ENCODE measurements at regions of chr5 and their contacts with region 1.

Region 1: DNA sequence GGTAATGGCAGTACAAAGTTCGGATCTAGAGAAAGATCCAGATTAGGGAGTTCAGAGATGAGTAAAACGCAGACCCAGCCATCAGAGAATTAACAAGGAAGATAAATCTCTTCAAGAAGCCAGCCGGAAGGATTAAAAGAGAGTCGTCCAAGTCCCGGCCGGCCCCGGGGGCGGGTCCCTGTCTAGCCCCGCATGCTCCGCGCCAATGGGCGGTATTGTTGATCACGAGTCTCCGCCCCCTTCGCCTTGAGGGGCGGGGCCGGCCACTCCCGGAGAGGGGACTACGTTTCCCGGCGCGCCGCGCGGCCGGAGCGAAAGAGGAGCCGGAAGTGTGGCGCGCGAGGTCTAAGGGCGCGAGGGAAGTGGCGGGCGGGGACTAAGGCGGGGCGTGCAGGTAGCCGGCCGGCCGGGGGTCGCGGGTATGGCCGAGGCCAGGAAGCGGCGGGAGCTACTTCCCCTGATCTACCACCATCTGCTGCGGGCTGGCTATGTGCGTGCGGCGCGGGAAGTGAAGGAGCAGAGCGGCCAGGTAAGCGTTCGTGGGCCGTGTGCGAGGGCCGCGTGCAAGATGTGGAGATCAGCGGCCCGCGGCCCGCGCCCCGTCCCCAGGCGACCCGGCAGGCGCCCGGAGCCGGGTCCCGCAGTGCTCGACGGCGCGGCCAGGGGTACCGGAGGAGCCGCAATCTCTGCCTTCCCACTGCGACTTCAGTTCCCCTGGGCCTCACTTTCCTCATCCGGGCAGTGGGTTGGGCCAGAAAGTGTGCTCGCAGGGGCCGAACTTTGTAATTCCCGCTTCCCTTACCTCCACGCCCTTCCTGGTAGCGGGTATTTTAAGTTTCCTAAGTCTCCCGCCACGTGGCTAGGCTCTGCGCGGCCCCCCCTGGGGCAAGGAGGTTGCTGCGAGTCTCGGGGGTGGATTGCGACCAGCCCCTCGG is at the start of gene TCOF1:
- DNase-seq: peak; percentile 94 to 98 (median 97)
- ATAC-seq: peak; percentile 100
- H3K4me3 ChIP-seq: peak within 1 kb of the TSS; percentile 62
- H3K4me3 Mint-ChIP-seq: peak within 1 kb of the TSS; percentile 85 to 95 (median 91)
- H3K27ac ChIP-seq: peak within 1 kb of the TSS; percentile 81
- H3K27ac Mint-ChIP-seq: peak within 1 kb of the TSS; percentile 87 to 97 (median 96)
- H3K4me1 ChIP-seq: peaks cover 23 to 24% of the 10 kb centered on the region in 2 donors
- H3K4me1 Mint-ChIP-seq: peaks cover 35 to 54% (median 48%) of the 10 kb centered on the region in 7 donors
- H3K27me3 ChIP-seq: no peaks in the 10 kb centered on the region
- H3K27me3 Mint-ChIP-seq: peaks cover 0 to 2% (median 0%) of the 10 kb centered on the region in 5 donors
- total RNA-seq, gene TCOF1: 45.9 to 60.0 (median 54.6) TPM

Region 2: DNA sequence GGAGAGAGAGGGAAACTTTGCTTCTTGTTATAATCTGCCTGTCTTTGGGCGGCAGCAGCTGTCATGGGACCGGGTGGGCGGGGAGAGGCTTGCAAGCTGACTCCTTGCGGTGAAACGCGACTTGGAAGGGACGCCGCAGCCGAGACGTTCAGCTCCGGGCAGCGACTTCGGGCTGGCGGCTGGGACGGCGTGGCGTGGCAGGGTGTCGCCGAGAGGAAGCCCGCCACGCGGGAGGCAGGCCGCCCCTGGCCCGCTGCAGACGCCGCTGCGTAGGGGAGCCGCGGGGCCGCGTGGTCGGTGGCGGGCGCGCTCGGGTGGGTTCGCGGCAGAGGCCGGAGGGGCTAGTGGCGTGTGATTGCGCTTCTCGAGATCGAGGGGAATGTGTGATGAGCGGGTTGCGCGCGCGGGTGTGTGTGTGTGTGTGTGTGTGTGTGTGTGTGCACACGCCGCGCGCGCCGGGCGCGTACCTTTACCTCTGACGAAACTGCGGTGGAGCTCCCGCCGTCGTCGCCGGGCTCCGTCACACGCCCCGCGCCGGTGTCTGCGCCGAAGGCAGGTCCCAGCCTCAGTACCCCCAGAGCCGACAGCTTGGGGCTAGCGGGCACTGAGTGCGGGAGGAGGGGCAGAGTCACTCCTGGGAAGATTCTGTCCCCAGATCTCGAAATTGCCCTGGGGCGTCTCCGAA is 625.8 kb before region 1 on chr5:
- CTCF ChIA-PET with region 1: no interaction called
- POLR2A ChIA-PET with region 1: no interaction called
- intact Hi-C with region 1: loop called in 1 of 2 experiments (anchors 5 kb)
- DNase-seq: peak; percentile 52 to 84 (median 67)
- ATAC-seq: peak; percentile 64
- H3K4me3 ChIP-seq: peak overlapping the region; percentile 84
- H3K4me3 Mint-ChIP-seq: peak overlapping the region; percentile 77 to 92 (median 87)
- H3K27ac ChIP-seq: peak overlapping the region; percentile 67
- H3K27ac Mint-ChIP-seq: peak overlapping the region in 8 of 9 donors; percentile 38 to 93 (median 78)
- H3K4me1 ChIP-seq: no peaks in the 10 kb centered on the region
- H3K4me1 Mint-ChIP-seq: peaks cover 0 to 17% (median 8%) of the 10 kb centered on the region in 7 donors
- H3K27me3 ChIP-seq: no peaks in the 10 kb centered on the region
- H3K27me3 Mint-ChIP-seq: peaks cover 0 to 18% (median 0%) of the 10 kb centered on the region in 5 donors

Region 3: DNA sequence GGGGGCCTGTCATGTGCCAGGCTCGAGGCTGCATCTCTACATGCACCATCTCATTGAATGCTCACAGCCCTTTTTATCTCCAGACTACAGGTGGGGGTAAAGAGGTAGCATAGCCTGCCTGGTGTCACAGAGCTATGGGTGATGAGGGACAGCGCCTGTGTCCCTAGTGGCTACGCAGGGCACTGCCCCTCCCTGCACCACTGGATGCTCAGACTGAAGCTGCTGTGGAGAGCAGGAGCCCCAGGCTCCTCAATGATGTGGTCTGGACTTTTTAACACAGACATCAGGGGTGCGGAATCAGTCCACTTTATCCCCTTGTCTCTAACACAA is 70.7 kb before region 1 on chr5:
- CTCF ChIA-PET with region 1: no interaction called
- POLR2A ChIA-PET with region 1: no interaction called
- intact Hi-C with region 1: no loop called
- DNase-seq: peak in 1 of 9 donors; percentile 1
- ATAC-seq: peak; percentile 36
- H3K4me3 ChIP-seq: no peak overlapping the region
- H3K4me3 Mint-ChIP-seq: no peak overlapping the region
- H3K27ac ChIP-seq: no peak overlapping the region
- H3K27ac Mint-ChIP-seq: no peak overlapping the region
- H3K4me1 ChIP-seq: no peaks in the 10 kb centered on the region
- H3K4me1 Mint-ChIP-seq: no peaks in the 10 kb centered on the region
- H3K27me3 ChIP-seq: no peaks in the 10 kb centered on the region
- H3K27me3 Mint-ChIP-seq: peaks cover 0 to 8% (median 0%) of the 10 kb centered on the region in 5 donors

Region 4: GRCh38 chr5:150409638-150410523 is 52.3 kb after region 1 on chr5:
- CTCF ChIA-PET with region 1: no interaction called
- POLR2A ChIA-PET with region 1: interaction called, 7 read pairs
- intact Hi-C with region 1: loop called (anchors 1 kb)
- DNase-seq: peak in 7 of 9 donors; percentile 27 to 48 (median 43)
- ATAC-seq: no peak
- H3K4me3 ChIP-seq: peak overlapping the region; percentile 83
- H3K4me3 Mint-ChIP-seq: peak overlapping the region; percentile 91 to 100 (median 98)
- H3K27ac ChIP-seq: peak overlapping the region; percentile 98
- H3K27ac Mint-ChIP-seq: peak overlapping the region; percentile 96 to 100 (median 100)
- H3K4me1 ChIP-seq: peaks cover 32 to 35% of the 10 kb centered on the region in 2 donors
- H3K4me1 Mint-ChIP-seq: peaks cover 24 to 52% (median 38%) of the 10 kb centered on the region in 7 donors
- H3K27me3 ChIP-seq: no peaks in the 10 kb centered on the region
- H3K27me3 Mint-ChIP-seq: no peaks in the 10 kb centered on the region

Region 5: DNA sequence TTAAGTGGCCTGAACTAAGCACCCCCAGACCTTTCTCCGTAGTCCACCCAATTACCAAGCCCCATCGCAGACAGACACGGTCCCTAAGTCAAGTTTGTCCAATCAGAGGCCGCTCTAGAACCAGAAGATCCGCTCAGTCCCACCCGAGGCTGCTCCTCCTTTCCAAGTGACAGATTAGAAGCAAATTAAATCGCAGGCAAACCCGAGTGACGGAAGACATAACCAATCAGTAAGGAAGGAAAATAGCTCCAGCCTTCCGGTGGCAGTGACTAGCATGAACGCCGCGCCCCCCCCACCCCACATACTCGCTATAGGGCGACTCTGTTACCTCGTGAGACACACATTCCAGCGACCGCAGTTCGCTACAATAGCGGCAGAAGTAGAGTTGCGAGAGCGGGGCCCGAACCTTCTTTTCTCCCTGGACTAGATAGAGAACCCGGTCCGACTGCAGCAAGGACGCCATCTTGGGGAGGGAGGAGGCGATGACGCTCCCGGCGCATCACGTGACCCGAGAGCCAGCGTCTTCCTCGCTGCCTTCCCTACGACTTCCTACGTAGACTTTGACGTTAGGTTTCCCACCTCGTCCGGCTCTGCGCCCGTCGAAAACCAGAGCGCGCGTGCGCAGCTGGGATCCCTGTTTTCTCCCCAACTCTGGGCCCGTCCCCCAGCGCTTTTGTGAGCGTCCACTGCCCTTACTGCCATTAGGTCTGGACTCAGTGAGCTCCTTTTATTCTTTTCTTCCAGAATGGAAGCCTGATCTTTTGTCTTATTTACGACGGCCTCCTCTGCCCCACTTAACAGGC is 401.1 kb after region 1 on chr5 and contains the start of gene DCTN4:
- CTCF ChIA-PET with region 1: no interaction called
- POLR2A ChIA-PET with region 1: no interaction called
- intact Hi-C with region 1: loop called (anchors 1 kb)
- DNase-seq: peak; percentile 84 to 96 (median 94)
- ATAC-seq: peak; percentile 95
- H3K4me3 ChIP-seq: peak within 1 kb of the TSS; percentile 86
- H3K4me3 Mint-ChIP-seq: peak within 1 kb of the TSS in 3 of 10 donors; percentile 23 to 46 (median 36)
- H3K27ac ChIP-seq: peak within 1 kb of the TSS; percentile 96
- H3K27ac Mint-ChIP-seq: peak within 1 kb of the TSS in 1 of 9 donors; percentile 62
- H3K4me1 ChIP-seq: peaks cover 5 to 16% of the 10 kb centered on the region in 2 donors
- H3K4me1 Mint-ChIP-seq: peaks cover 22 to 54% (median 36%) of the 10 kb centered on the region in 7 donors
- H3K27me3 ChIP-seq: no peaks in the 10 kb centered on the region
- H3K27me3 Mint-ChIP-seq: peaks cover 0 to 5% (median 0%) of the 10 kb centered on the region in 5 donors
- total RNA-seq, gene DCTN4: 42.4 to 88.2 (median 46.9) TPM

Region 6: DNA sequence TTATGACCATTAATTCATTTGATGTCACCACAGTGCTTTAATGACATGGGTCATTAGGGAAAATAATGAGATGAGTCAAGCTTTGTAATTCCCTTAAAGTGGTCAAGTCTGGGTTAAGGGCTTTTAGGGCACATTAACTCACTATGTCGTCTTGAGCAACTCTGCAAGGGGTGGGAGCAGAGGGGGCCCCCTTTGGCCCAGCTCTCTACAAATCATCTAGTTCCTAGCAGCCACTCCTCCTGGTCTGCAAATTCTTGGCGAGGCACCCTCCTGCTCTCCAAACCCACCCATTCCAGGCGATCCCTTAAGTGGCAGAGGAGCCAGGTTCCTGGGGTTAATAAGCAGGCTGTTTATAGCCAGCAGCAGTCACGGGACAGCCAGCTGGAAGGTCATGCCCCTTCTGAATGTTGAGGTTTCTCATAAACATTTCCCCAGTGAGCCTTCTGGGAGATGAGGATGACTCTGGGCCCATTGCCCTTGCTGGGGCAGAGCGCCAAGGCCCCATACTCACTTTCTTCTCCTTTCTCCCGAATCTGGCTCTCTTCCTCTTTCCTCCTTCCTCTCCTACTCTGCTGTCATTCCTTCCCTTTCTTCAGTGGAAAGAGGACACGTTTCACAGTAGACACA is 648.5 kb after region 1 on chr5:
- CTCF ChIA-PET with region 1: no interaction called
- POLR2A ChIA-PET with region 1: no interaction called
- intact Hi-C with region 1: no loop called
- DNase-seq: no peak
- ATAC-seq: no peak
- H3K4me3 ChIP-seq: no peak overlapping the region
- H3K4me3 Mint-ChIP-seq: no peak overlapping the region
- H3K27ac ChIP-seq: no peak overlapping the region
- H3K27ac Mint-ChIP-seq: no peak overlapping the region
- H3K4me1 ChIP-seq: no peaks in the 10 kb centered on the region
- H3K4me1 Mint-ChIP-seq: peaks cover 0 to 4% (median 0%) of the 10 kb centered on the region in 7 donors
- H3K27me3 ChIP-seq: no peaks in the 10 kb centered on the region
- H3K27me3 Mint-ChIP-seq: peaks cover 0 to 9% (median 5%) of the 10 kb centered on the region in 5 donors

Region 7: GRCh38 chr5:151213800-151214613 is 856.4 kb after region 1 on chr5:
- CTCF ChIA-PET with region 1: no interaction called
- POLR2A ChIA-PET with region 1: no interaction called
- intact Hi-C with region 1: loop called in 1 of 2 experiments (anchors 1 kb)
- DNase-seq: peak; percentile 53 to 85 (median 79)
- ATAC-seq: peak; percentile 90
- H3K4me3 ChIP-seq: peak overlapping the region; percentile 74
- H3K4me3 Mint-ChIP-seq: peak overlapping the region; percentile 80 to 93 (median 89)
- H3K27ac ChIP-seq: peak overlapping the region; percentile 93
- H3K27ac Mint-ChIP-seq: peak overlapping the region; percentile 90 to 98 (median 97)
- H3K4me1 ChIP-seq: peaks cover 80 to 82% of the 10 kb centered on the region in 2 donors
- H3K4me1 Mint-ChIP-seq: peaks cover 56 to 95% (median 84%) of the 10 kb centered on the region in 7 donors
- H3K27me3 ChIP-seq: no peaks in the 10 kb centered on the region
- H3K27me3 Mint-ChIP-seq: no peaks in the 10 kb centered on the region